HepG2 (cell line): ENCODE measurements at regions of chr11 and their contacts with region 1.

Region 1: DNA sequence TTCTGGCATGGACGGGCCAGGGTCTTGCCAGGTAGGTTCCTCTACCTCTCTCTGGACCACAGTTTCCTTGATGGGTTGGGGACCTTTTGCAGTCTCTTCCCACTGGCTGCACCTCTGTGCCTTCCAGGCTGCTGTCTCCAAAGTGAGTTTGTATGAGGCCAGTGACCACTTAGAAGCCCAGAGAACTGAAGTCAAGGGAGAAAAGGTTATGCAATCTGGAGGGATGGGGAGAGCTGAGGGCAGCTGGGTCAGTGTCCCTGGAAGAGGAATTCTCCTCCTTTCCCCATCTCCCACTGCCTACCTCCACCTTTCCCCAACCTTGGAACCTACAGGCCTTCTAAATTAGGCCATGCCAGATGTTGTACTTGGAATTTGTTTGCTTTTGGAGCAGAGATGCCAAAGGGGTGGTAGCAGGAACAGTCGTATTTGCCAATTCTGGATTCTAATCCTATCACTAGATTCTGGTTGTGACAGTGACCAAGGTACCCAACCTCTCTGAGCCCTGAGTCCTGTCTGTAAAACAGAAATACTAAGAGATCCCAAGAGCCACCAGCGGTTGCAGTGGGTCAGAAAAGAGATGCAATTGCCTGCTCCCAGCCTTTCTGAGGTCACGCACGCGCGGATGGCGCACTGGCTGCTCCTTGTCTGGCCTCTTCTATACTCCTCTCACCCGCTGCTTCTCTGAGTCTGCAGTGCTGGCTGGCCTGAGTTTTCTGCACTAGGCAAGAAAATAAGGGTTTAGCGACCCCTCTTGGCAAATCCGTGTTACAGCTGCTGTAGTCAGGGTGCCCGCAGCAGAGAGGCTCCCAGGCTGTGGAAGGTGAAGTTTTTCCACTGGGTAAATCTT is 10.7 kb upstream of the ACCSL start:
- DNase-seq: peak; percentile 63
- ATAC-seq: peak; percentile 98
- H3K4me3 ChIP-seq: no peak overlapping the region
- H3K27ac ChIP-seq: no peak overlapping the region
- H3K4me1 ChIP-seq: no peaks in the 10 kb centered on the region
- H3K27me3 ChIP-seq: peaks cover 4 to 9% of the 10 kb centered on the region in 2 experiments; a peak in 2 of 5 replicates
- CTCF ChIP-seq: peak; percentile 89
- EP300 ChIP-seq: no peak
- POLR2A ChIP-seq: no peak
- RAD21 ChIP-seq: peak; percentile 76

Region 2: DNA sequence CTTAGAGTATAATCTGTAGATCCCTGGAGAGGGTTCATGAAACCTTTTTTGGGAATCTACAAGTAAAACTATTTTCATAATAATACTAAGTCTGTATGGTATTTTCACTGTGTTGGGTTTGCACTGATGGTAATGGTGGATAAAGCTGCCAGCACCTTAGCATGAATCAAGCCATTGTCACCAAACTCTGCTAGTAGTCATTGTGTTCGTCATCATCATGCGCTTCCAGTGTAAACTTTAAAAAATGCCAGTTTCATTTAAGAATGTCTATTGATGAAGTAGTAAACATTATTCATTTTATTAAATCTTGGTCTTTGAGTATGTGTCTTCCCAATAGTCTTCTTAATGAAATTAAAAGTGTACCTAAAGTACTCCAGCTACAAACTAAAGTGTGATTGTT is 141.4 kb before region 1 on chr11:
- CTCF ChIA-PET with region 1: interaction called, 51 read pairs
- POLR2A ChIA-PET with region 1: no interaction called
- in situ Hi-C with region 1: no loop called
- intact Hi-C with region 1: loop called (anchors 1 kb)
- DNase-seq: no peak
- ATAC-seq: no peak
- H3K4me3 ChIP-seq: no peak overlapping the region
- H3K27ac ChIP-seq: no peak overlapping the region
- H3K4me1 ChIP-seq: no peaks in the 10 kb centered on the region
- H3K27me3 ChIP-seq: no peaks in the 10 kb centered on the region
- CTCF ChIP-seq: no peak
- EP300 ChIP-seq: no peak
- POLR2A ChIP-seq: no peak
- RAD21 ChIP-seq: no peak

Region 3: DNA sequence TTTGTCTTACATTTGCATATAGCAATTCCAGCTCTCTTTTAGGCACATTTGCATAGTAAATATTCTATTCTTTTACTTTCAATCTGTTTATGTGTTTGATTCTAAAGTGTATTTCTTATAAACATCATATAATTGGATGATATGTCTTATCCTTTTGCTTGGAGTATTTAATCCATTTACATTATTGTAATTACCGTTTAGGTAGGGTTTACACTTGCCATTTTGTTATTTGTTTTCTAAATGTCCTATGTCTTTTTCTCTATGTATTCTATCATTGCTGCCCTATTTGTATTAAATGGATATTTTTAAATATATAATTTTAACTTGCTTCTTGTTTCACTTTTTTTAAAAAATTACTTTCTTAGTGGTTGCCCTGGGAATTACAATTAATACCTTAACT is 12.1 kb before region 1 on chr11:
- CTCF ChIA-PET with region 1: no interaction called
- POLR2A ChIA-PET with region 1: no interaction called
- in situ Hi-C with region 1: no loop called
- intact Hi-C with region 1: no loop called
- DNase-seq: no peak
- ATAC-seq: no peak
- H3K4me3 ChIP-seq: no peak overlapping the region
- H3K27ac ChIP-seq: no peak overlapping the region
- H3K4me1 ChIP-seq: no peaks in the 10 kb centered on the region
- H3K27me3 ChIP-seq: no peaks in the 10 kb centered on the region
- CTCF ChIP-seq: no peak
- EP300 ChIP-seq: no peak
- POLR2A ChIP-seq: no peak
- RAD21 ChIP-seq: no peak